Ovary (tissue), 10 donors: ENCODE measurements at regions of chr9 and their contacts with region 1.

Region 1: GRCh38 chr9:76004526-76004925 is 114.1 kb downstream of the PCSK5 start:
- DNase-seq: no peak
- H3K4me3 ChIP-seq: no peak overlapping the region
- H3K27ac ChIP-seq: no peak overlapping the region
- H3K4me1 ChIP-seq: no peaks in the 10 kb centered on the region
- H3K27me3 ChIP-seq: no peaks in the 10 kb centered on the region
- CTCF ChIP-seq: no peak
- EP300 ChIP-seq: no peak
- POLR2A ChIP-seq: no peak

Region 2: DNA sequence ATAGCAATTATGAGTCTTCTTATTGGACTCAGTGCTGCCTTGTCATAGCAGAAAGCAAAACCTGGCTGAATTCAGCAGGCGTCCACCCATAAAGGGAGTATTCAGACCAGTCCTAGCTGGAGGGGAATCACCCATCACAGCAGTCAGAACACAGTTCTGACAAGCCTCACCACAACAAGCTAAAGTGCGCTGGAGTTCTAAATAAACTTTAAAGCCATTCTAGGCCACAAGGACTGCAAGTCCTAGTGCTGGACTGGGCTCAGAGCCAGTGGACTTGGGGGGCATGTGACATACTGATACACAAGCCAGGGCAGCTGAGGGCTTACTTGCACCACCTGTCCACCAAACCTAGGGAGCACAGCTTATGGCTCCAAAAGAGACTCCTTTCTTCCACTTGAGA is 229.4 kb before region 1 on chr9:
- intact Hi-C with region 1: no loop called
- DNase-seq: no peak
- H3K4me3 ChIP-seq: no peak overlapping the region
- H3K27ac ChIP-seq: no peak overlapping the region
- H3K4me1 ChIP-seq: no peaks in the 10 kb centered on the region
- H3K27me3 ChIP-seq: no peaks in the 10 kb centered on the region
- CTCF ChIP-seq: no peak
- EP300 ChIP-seq: no peak
- POLR2A ChIP-seq: no peak

Region 3: DNA sequence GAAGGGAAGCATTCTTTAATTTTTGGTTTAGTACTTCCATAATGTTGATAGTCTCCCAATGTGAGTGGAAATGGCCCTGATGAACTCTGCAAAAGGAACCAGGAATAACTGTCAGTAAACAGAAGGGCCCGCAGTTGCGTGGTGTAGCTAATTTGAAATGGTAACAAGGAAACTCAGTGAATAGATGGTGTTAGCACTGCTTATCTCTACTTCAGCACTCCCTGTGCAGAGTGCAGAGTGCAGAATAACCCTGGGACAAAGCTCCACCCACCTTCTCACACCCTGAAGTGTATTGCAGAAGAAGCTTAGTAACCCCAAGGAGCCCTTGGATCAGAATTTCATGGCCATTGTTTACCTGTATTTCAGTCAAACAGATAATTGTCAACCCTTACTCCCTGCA is 44.8 kb after region 1 on chr9:
- intact Hi-C with region 1: loop called in 1 of 4 experiments (anchors 1 kb)
- DNase-seq: no peak
- H3K4me3 ChIP-seq: no peak overlapping the region
- H3K27ac ChIP-seq: no peak overlapping the region
- H3K4me1 ChIP-seq: no peaks in the 10 kb centered on the region
- H3K27me3 ChIP-seq: no peaks in the 10 kb centered on the region
- CTCF ChIP-seq: no peak
- EP300 ChIP-seq: no peak
- POLR2A ChIP-seq: no peak